Panc1 (cell line): ENCODE measurements at regions of chr14 and their contacts with region 1.

Region 1: GRCh38 chr14:102591889-102592763 is at the start of gene RCOR1:
- DNase-seq: peak; percentile 30
- ATAC-seq: peak; percentile 92
- H3K4me3 ChIP-seq: peak within 1 kb of the TSS; percentile 70 to 76
- H3K27ac ChIP-seq: peak within 1 kb of the TSS; percentile 77
- H3K4me1 ChIP-seq: peaks cover 12% of the 10 kb centered on the region
- H3K27me3 ChIP-seq: no peaks in the 10 kb centered on the region
- CTCF ChIP-seq: no peak
- total RNA-seq, gene RCOR1: 27.1 TPM

Region 2: DNA sequence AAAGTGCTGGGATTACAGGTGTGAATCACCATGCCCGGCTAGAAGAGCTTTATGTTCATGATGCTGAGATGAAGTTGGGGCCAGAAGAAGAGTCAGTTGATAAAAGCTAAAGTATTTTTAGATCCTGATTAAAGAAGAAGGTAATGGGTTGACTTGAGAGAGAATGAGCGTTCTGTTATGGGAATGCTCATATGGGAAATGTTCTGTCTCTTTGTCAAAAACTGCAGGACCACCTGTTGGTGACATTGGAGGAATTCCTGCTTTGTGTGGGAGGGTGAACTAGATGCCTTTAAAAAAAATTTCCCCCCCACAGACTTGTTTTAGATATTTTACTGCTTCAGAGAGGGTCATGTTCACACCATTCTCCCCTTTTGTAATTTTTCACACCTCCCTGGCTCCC is 445.7 kb before region 1 on chr14:
- CTCF ChIA-PET with region 1: no interaction called
- POLR2A ChIA-PET with region 1: interaction called, 15 read pairs
- in situ Hi-C with region 1: no loop called
- intact Hi-C with region 1: no loop called
- DNase-seq: no peak
- ATAC-seq: no peak
- H3K4me3 ChIP-seq: no peak overlapping the region
- H3K27ac ChIP-seq: no peak overlapping the region
- H3K4me1 ChIP-seq: peaks cover 5% of the 10 kb centered on the region; the same call in 1 of the 2 replicates
- H3K27me3 ChIP-seq: no peaks in the 10 kb centered on the region
- CTCF ChIP-seq: no peak

Region 3: GRCh38 chr14:102516531-102517415 is 75.4 kb before region 1 on chr14:
- CTCF ChIA-PET with region 1: interaction called, 7 read pairs
- POLR2A ChIA-PET with region 1: interaction called, 18 read pairs
- in situ Hi-C with region 1: no loop called
- intact Hi-C with region 1: loop called (anchors 10 kb)
- DNase-seq: no peak
- ATAC-seq: peak; percentile 88
- H3K4me3 ChIP-seq: peak overlapping the region; percentile 48 to 52
- H3K27ac ChIP-seq: no peak overlapping the region
- H3K4me1 ChIP-seq: no peaks in the 10 kb centered on the region
- H3K27me3 ChIP-seq: no peaks in the 10 kb centered on the region
- CTCF ChIP-seq: peak; percentile 95

Region 4: GRCh38 chr14:102524466-102525218 is 67.5 kb before region 1 on chr14:
- CTCF ChIA-PET with region 1: interaction called, 3 read pairs
- POLR2A ChIA-PET with region 1: no interaction called
- in situ Hi-C with region 1: no loop called
- intact Hi-C with region 1: loop called (anchors 10 kb)
- DNase-seq: peak; percentile 86
- ATAC-seq: peak; percentile 98
- H3K4me3 ChIP-seq: peak overlapping the region; percentile 56 to 77
- H3K27ac ChIP-seq: peak overlapping the region; percentile 85
- H3K4me1 ChIP-seq: peaks cover 13% of the 10 kb centered on the region
- H3K27me3 ChIP-seq: no peaks in the 10 kb centered on the region
- CTCF ChIP-seq: peak; percentile 93

Region 5: DNA sequence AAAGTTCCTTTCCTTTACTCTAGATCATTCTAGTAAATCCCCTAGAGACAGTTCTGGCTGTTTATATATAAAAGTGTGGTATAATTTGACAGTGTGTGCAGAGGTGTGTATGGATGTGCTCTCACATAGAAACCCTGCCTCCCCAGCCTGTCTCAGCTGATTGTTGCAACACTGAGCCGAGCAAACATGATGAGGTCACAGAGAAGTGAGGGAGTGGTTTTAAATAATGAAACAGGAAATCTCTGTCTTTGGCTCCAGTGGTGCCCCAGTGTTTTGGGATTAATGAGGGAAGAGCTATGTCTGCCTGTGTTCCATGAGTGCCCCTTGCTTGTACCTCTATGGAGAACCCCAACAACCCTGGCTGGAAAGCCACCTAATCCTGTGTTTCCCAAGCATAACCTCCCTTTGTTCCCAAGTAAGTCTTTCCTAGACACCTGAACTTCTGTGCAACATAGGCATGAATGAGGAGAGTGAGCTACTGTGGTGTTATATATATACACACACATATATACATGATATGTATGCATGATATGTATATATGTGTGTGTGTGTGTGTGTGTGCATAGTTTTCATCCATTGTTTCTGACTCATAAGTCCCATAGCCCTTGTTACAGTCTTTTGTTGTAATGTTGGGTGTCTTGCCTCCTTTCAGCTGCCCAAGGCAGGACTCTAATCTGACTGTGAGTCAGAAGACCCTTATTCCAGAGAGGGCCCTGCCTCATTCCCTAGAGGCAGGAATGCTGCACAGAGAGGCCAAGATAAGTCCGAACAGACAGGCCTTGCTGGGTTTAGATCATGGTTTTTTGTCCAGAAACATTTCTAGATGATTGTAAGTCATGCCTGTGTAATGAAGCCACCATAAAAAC is 203.2 kb after region 1 on chr14:
- CTCF ChIA-PET with region 1: no interaction called
- POLR2A ChIA-PET with region 1: no interaction called
- in situ Hi-C with region 1: no loop called
- intact Hi-C with region 1: no loop called
- DNase-seq: no peak
- ATAC-seq: peak; percentile 79
- H3K4me3 ChIP-seq: no peak overlapping the region
- H3K27ac ChIP-seq: no peak overlapping the region
- H3K4me1 ChIP-seq: 0 out of 2 replicates have a peak, but pooled peaks cover 3% of the 10 kb centered on the region
- H3K27me3 ChIP-seq: no peaks in the 10 kb centered on the region
- CTCF ChIP-seq: no peak